A549 (cell line): ENCODE measurements at regions of chr19 and their contacts with region 1.

Region 1: DNA sequence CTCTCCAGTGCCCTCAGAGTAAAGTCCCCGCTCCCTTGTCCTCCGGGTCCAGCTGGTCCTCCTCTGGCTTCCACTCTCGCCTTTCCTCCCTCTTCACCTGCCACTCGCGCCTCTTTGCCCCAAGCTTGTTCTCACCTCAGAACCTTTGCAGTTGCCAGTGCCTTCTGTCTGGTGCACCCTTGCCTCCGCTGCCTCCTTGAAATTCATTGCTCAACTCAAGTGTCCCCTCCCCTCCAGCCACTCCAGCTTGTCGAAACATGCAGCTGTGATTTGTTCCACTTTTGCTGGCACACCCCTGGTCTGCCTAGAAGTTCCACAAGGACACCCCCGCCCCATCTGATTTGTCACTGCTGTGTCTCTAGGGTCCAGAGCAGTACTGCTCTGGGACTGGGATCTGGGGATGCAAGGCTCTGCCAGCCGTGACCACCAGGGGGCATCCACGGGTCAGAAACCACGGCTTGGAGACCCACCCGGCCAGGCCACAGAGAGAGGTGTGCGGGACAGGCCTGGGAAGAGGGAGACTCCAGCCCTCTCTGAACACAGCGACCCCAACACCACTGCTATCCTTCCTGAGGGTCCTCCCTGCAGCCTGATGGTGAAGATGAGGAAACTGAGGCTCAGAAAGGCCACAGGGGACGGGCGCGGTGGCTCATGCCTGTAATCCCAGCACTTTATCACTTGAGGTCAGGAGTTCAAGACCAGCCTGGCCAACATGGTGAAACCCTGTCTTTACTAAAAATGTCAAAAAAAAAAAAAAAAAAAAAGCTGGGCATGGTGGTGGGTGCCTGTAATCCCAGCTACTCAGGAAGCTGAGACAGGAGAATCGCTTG is 49.9 kb downstream of the AP1M1 start:
- DNase-seq: peak; percentile 74 to 76
- ATAC-seq: peak; percentile 98 to 100
- H3K4me3 ChIP-seq: no peak overlapping the region
- H3K27ac ChIP-seq: no peak overlapping the region
- H3K4me1 ChIP-seq: no peaks in the 10 kb centered on the region
- CTCF ChIP-seq: peak; percentile 72
- EP300 ChIP-seq: no peak
- POLR2A ChIP-seq: no peak
- RAD21 ChIP-seq: peak; percentile 95 to 97

Region 2: GRCh38 chr19:16235811-16236652 is 11.5 kb before region 1 on chr19:
- CTCF ChIA-PET with region 1: interaction called, 18 read pairs
- POLR2A ChIA-PET with region 1: no interaction called
- DNase-seq: no peak
- ATAC-seq: no peak
- H3K4me3 ChIP-seq: no peak overlapping the region
- H3K27ac ChIP-seq: no peak overlapping the region
- H3K4me1 ChIP-seq: no peaks in the 10 kb centered on the region
- CTCF ChIP-seq: no peak
- EP300 ChIP-seq: no peak
- POLR2A ChIP-seq: no peak
- RAD21 ChIP-seq: no peak

Region 3: GRCh38 chr19:16324384-16325160 is 77.0 kb after region 1 on chr19 and contains the start of gene KLF2:
- CTCF ChIA-PET with region 1: interaction called, 15 read pairs
- POLR2A ChIA-PET with region 1: interaction called, 3 read pairs
- DNase-seq: peak; percentile 80 to 87
- ATAC-seq: peak; percentile 80 to 88
- H3K4me3 ChIP-seq: peak within 1 kb of the TSS; percentile 76
- H3K27ac ChIP-seq: peak within 1 kb of the TSS; percentile 79 to 94
- H3K4me1 ChIP-seq: peaks cover 19% of the 10 kb centered on the region; the same call in 1 of the 3 replicates
- CTCF ChIP-seq: no peak
- EP300 ChIP-seq: no peak
- POLR2A ChIP-seq: peak; percentile 59
- RAD21 ChIP-seq: no peak
- polyA plus RNA-seq, gene KLF2: 2.7 and 3.4 TPM in 2 replicates

Region 4: GRCh38 chr19:16363133-16363851 is 115.7 kb after region 1 on chr19:
- CTCF ChIA-PET with region 1: interaction called, 28 read pairs
- POLR2A ChIA-PET with region 1: interaction called, 3 read pairs
- DNase-seq: no peak
- ATAC-seq: no peak
- H3K4me3 ChIP-seq: no peak overlapping the region
- H3K27ac ChIP-seq: no peak overlapping the region
- H3K4me1 ChIP-seq: no peaks in the 10 kb centered on the region
- CTCF ChIP-seq: no peak
- EP300 ChIP-seq: no peak
- POLR2A ChIP-seq: no peak
- RAD21 ChIP-seq: no peak

Region 5: GRCh38 chr19:16376649-16377048 is 129.1 kb after region 1 on chr19:
- CTCF ChIA-PET with region 1: interaction called, 92 read pairs
- POLR2A ChIA-PET with region 1: no interaction called
- DNase-seq: peak; percentile 20 to 33
- ATAC-seq: peak; percentile 92 to 95
- H3K4me3 ChIP-seq: no peak overlapping the region
- H3K27ac ChIP-seq: no peak overlapping the region
- H3K4me1 ChIP-seq: peaks cover 9% of the 10 kb centered on the region
- CTCF ChIP-seq: peak; percentile 27
- EP300 ChIP-seq: no peak
- POLR2A ChIP-seq: no peak
- RAD21 ChIP-seq: peak in 1 of 2 experiments; percentile 18; a peak in 1 of 5 replicates